Ascending aorta (tissue), 2 donors: ENCODE measurements at regions of chr3 and their contacts with region 1.

Region 1: GRCh38 chr3:26712211-26713026 is 89.8 kb downstream of the LRRC3B start:
- DNase-seq: no peak
- H3K4me3 ChIP-seq: no peak overlapping the region
- H3K27ac ChIP-seq: no peak overlapping the region
- H3K4me1 ChIP-seq: no peaks in the 10 kb centered on the region
- H3K27me3 ChIP-seq: no peaks in the 10 kb centered on the region
- CTCF ChIP-seq: peak; percentile 12 to 62 (median 62)

Region 2: GRCh38 chr3:25843332-25843731 is 869.1 kb before region 1 on chr3:
- intact Hi-C with region 1: loop called (anchors 5 kb)
- DNase-seq: no peak
- H3K4me3 ChIP-seq: no peak overlapping the region
- H3K27ac ChIP-seq: no peak overlapping the region
- H3K4me1 ChIP-seq: no peaks in the 10 kb centered on the region
- H3K27me3 ChIP-seq: no peaks in the 10 kb centered on the region
- CTCF ChIP-seq: peak in 2 of 3 experiments; percentile 13 to 42

Region 3: DNA sequence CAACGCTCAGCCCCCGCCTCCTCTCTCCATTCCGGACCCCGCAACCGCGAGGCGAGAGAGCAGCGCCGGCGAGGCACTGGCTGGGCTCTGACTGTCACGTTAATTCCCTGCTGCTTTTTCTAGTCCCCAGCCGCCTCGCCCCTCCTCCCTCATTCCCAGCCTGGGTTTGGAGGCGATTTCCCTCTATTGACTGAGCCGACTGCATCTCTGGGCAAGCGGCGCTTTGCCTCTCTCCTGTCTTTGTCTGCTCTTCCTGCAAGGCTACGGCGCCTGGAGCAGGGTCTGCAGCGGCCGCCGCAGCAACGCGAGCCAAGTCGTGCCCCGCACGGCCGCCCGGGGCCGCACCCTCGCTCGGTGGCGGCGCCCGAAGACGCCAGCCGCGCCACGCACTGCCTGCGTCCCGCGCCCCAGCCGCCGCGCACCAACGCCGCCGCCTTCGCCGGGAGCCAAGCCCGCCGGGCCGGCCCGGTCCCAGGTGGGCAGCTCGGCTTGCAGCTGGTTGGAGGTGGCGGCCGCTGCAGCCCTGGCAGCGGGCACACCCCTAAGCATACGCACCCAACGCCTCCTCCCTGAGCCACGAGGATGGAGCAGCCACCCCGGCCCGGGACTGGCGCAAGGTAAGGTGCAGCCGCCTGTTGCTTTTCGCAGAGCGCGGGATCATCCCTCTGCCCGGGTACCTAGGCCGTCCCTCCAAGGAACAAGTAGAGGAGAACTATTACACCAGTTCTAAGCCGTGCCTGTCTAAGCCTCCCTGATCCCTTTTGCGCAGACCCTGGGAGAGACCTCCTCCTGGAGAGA is 89.6 kb before region 1 on chr3 and contains the start of gene LRRC3B:
- intact Hi-C with region 1: no loop called
- DNase-seq: no peak
- H3K4me3 ChIP-seq: peak within 1 kb of the TSS; percentile 47 to 48
- H3K27ac ChIP-seq: no peak within 1 kb of the TSS
- H3K4me1 ChIP-seq: peaks cover 0 to 4% of the 10 kb centered on the region in 2 donors
- H3K27me3 ChIP-seq: no peaks in the 10 kb centered on the region
- CTCF ChIP-seq: no peak
- total RNA-seq, gene LRRC3B: not detected

Region 4: DNA sequence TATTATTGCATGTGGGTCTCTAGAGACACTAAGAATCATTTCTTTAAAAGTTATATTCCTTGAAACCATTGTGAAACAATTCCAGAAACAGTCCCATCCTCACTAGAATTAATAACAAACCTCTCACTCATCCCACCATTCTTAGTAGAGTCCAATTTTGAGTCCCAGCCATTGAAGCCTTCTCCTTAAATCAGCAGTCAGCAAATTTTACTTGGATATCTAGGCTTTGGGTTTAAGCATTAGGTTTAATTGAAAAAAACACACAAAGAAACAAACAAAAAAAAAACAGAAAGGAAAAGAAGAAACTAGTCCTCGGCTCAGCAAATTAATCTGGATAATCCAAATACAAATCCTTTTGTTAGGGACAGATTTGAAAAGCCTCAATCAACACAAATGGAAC is 19.4 kb after region 1 on chr3:
- intact Hi-C with region 1: no loop called
- DNase-seq: no peak
- H3K4me3 ChIP-seq: no peak overlapping the region
- H3K27ac ChIP-seq: no peak overlapping the region
- H3K4me1 ChIP-seq: no peaks in the 10 kb centered on the region
- H3K27me3 ChIP-seq: no peaks in the 10 kb centered on the region
- CTCF ChIP-seq: no peak

Region 5: GRCh38 chr3:27840807-27841594 is 1128.6 kb after region 1 on chr3:
- intact Hi-C with region 1: no loop called
- DNase-seq: no peak
- H3K4me3 ChIP-seq: no peak overlapping the region
- H3K27ac ChIP-seq: no peak overlapping the region
- H3K4me1 ChIP-seq: no peaks in the 10 kb centered on the region
- H3K27me3 ChIP-seq: no peaks in the 10 kb centered on the region
- CTCF ChIP-seq: no peak